ENCODE measurements at regions of chr2 and their contacts with region 1.

Region 1: GRCh38 chr2:127884436-127885345 is 1.1 kb downstream of the AMMECR1L start:
- DNase-seq: no peak

Region 2: DNA sequence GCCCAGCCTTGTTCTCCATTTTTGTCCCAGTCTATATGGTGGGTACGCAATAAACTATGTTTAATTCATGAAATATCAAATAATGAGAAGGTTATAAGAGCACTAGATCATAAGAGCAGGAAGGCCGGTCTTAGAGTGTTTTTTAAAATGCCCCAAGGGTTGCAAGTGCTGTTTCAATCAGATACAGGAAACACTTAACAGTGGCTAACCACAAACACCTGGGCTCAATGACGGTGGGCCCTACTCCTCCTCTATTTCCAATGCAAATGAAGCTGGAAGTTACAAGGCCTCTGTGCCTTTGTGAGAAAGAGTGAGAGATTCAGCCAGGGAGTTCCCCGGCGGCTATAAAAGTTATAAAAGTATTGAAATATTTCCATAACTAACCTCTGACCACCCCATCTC is 54.8 kb before region 1 on chr2:
- intact Hi-C with region 1: no loop called
- DNase-seq: no peak

Region 3: GRCh38 chr2:128027801-128028667 is 143.3 kb after region 1 on chr2 and contains the start of gene SAP130:
- intact Hi-C with region 1: loop called (anchors 5 kb)
- DNase-seq: peak; percentile 99
- total RNA-seq, gene SAP130: 19.9 TPM

Region 4: GRCh38 chr2:128090945-128091725 is 206.4 kb after region 1 on chr2 and contains the start of gene UGGT1:
- intact Hi-C with region 1: loop called (anchors 5 kb)
- DNase-seq: peak; percentile 98
- total RNA-seq, gene UGGT1: 28.0 TPM

Region 5: GRCh38 chr2:128232965-128233789 is 348.5 kb after region 1 on chr2:
- intact Hi-C with region 1: loop called (anchors 10 kb)
- DNase-seq: peak; percentile 96

Measured in cardiac septum (tissue), 1 donor.